ENCODE measurements at regions of chr13 and their contacts with region 1.

Region 1: GRCh38 chr13:44815623-44816022 is 173.6 kb downstream of the NUFIP1 start:
- DNase-seq: peak; percentile 92
- H3K4me3 ChIP-seq: no peak overlapping the region
- H3K27ac ChIP-seq: peak overlapping the region; percentile 27
- H3K4me1 ChIP-seq: peaks cover 38% of the 10 kb centered on the region
- H3K27me3 ChIP-seq: no peaks in the 10 kb centered on the region
- CTCF ChIP-seq: no peak

Region 2: DNA sequence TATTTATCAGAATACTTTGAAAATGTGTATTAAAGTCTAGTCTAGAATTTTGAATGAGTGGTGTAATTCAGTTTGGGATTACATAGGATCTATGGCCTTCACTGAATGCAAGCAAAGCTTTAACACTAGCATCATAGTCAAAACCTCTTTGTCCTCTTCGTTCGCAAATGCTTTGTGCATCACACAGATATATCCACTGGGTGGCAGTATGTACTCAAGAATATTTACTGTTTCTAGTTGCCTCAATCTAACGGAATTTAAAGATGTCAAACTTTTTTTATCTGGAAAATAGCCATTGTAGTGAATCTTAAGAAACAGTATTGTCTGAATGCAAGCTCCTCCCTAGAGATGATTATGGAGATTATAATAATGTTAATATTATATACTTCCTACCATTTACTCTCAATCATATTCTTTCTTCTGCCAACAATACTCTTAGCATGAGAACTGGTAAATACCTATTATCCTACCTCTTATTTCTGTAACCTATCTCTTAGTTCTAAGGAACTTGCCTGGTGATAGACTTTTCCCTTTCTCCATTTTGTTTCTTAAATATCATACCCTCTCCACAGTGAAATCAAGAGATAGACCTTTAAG is 910.1 kb before region 1 on chr13:
- CTCF ChIA-PET with region 1: no interaction called
- dilution Hi-C with region 1: no loop called
- in situ Hi-C with region 1: no loop called
- intact Hi-C with region 1: loop called (anchors 5 kb)
- DNase-seq: peak; percentile 48
- H3K4me3 ChIP-seq: no peak overlapping the region
- H3K27ac ChIP-seq: no peak overlapping the region
- H3K4me1 ChIP-seq: peaks cover 3% of the 10 kb centered on the region
- H3K27me3 ChIP-seq: no peaks in the 10 kb centered on the region
- CTCF ChIP-seq: peak; percentile 62 to 79

Region 3: GRCh38 chr13:44116562-44117332 is 698.9 kb before region 1 on chr13:
- CTCF ChIA-PET with region 1: no interaction called
- dilution Hi-C with region 1: no loop called
- in situ Hi-C with region 1: no loop called
- intact Hi-C with region 1: no loop called
- DNase-seq: no peak
- H3K4me3 ChIP-seq: no peak overlapping the region
- H3K27ac ChIP-seq: no peak overlapping the region
- H3K4me1 ChIP-seq: no peaks in the 10 kb centered on the region
- H3K27me3 ChIP-seq: no peaks in the 10 kb centered on the region
- CTCF ChIP-seq: no peak

Region 4: GRCh38 chr13:44523146-44524015 is 292.2 kb before region 1 on chr13:
- CTCF ChIA-PET with region 1: interaction called, 3 read pairs
- dilution Hi-C with region 1: no loop called
- in situ Hi-C with region 1: no loop called
- intact Hi-C with region 1: loop called (anchors 2 kb)
- DNase-seq: peak; percentile 91
- H3K4me3 ChIP-seq: peak overlapping the region; percentile 17 to 41 (median 37)
- H3K27ac ChIP-seq: peak overlapping the region; percentile 62
- H3K4me1 ChIP-seq: peaks cover 14% of the 10 kb centered on the region
- H3K27me3 ChIP-seq: no peaks in the 10 kb centered on the region
- CTCF ChIP-seq: no peak

Region 5: GRCh38 chr13:44667943-44668342 is 147.7 kb before region 1 on chr13:
- CTCF ChIA-PET with region 1: no interaction called
- dilution Hi-C with region 1: no loop called
- in situ Hi-C with region 1: no loop called
- intact Hi-C with region 1: loop called (anchors 5 kb)
- DNase-seq: no peak
- H3K4me3 ChIP-seq: no peak overlapping the region
- H3K27ac ChIP-seq: no peak overlapping the region
- H3K4me1 ChIP-seq: no peaks in the 10 kb centered on the region
- H3K27me3 ChIP-seq: no peaks in the 10 kb centered on the region
- CTCF ChIP-seq: no peak

Region 6: DNA sequence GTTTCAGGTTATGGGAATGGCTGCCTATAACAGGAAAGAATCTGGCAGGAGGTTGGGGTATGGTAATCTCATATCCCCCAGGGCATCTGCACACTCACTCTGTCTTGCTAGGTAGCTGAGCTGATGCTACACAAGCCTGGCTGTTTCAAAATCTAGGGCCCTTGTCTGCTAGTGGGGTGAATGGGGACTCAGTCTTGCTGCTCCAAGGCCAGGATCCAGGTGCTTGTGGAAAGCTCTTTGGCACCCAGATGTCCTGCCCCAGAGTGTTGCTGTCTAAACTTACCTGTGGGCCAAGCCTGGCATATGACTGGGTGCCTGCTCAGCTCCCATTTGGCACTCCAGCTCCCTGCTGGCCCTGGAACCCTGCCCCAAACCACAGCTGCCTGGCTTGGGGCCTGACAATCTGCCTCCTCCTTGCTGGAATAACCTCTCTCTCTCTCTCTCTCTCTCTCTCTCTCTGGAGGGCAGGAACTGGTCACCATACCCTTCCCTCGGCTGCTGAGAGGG is 81.4 kb before region 1 on chr13:
- CTCF ChIA-PET with region 1: no interaction called
- dilution Hi-C with region 1: no loop called
- in situ Hi-C with region 1: no loop called
- intact Hi-C with region 1: loop called (anchors 5 kb)
- DNase-seq: peak; percentile 75
- H3K4me3 ChIP-seq: no peak overlapping the region
- H3K27ac ChIP-seq: peak overlapping the region; percentile 1
- H3K4me1 ChIP-seq: peaks cover 28% of the 10 kb centered on the region
- H3K27me3 ChIP-seq: no peaks in the 10 kb centered on the region
- CTCF ChIP-seq: no peak

Region 7: DNA sequence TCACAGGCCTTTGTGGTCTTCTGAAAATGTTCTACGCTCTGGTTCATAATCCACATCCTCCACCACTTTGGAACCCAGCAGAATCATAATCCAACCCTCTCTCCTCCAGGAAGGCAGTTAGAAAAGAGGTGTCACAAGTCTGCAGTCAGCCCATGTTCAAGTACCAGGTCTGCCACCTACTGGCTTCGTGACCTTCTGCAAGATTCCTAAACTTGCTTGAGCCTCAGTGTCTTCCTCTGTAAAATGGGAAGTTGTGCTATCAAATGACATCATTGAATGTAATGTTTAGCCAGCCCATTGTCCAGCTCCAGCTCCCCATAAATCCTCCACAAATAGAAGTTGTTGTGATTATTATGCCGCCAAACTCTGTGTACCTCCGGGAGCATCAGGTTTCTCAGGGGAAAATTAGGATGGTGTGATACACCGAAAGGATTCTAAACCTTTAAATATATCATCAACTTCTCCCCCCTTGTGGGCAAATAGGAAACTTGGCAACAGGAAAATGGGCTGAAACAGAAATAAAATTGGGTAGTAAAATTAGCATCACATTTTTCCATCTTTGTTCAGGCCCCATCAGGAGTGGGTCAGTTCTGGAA is 63.9 kb after region 1 on chr13:
- CTCF ChIA-PET with region 1: no interaction called
- dilution Hi-C with region 1: no loop called
- in situ Hi-C with region 1: no loop called
- intact Hi-C with region 1: loop called (anchors 2 kb)
- DNase-seq: peak; percentile 41
- H3K4me3 ChIP-seq: no peak overlapping the region
- H3K27ac ChIP-seq: no peak overlapping the region
- H3K4me1 ChIP-seq: no peaks in the 10 kb centered on the region
- H3K27me3 ChIP-seq: no peaks in the 10 kb centered on the region
- CTCF ChIP-seq: peak; percentile 56 to 65

Region 8: GRCh38 chr13:44969551-44970484 is 154.2 kb after region 1 on chr13:
- CTCF ChIA-PET with region 1: no interaction called
- dilution Hi-C with region 1: no loop called
- in situ Hi-C with region 1: no loop called
- intact Hi-C with region 1: loop called (anchors 2 kb)
- DNase-seq: peak; percentile 28
- H3K4me3 ChIP-seq: no peak overlapping the region
- H3K27ac ChIP-seq: no peak overlapping the region
- H3K4me1 ChIP-seq: peaks cover 3% of the 10 kb centered on the region
- H3K27me3 ChIP-seq: no peaks in the 10 kb centered on the region
- CTCF ChIP-seq: peak; percentile 68 to 72